Right ventricle myocardium superior (tissue), 1 donor: ENCODE measurements at regions of chr16 and their contacts with region 1.

Region 1: GRCh38 chr16:78122774-78123315 is 23.4 kb downstream of the WWOX start:
- DNase-seq: no peak
- ATAC-seq: peak; percentile 88

Region 2: DNA sequence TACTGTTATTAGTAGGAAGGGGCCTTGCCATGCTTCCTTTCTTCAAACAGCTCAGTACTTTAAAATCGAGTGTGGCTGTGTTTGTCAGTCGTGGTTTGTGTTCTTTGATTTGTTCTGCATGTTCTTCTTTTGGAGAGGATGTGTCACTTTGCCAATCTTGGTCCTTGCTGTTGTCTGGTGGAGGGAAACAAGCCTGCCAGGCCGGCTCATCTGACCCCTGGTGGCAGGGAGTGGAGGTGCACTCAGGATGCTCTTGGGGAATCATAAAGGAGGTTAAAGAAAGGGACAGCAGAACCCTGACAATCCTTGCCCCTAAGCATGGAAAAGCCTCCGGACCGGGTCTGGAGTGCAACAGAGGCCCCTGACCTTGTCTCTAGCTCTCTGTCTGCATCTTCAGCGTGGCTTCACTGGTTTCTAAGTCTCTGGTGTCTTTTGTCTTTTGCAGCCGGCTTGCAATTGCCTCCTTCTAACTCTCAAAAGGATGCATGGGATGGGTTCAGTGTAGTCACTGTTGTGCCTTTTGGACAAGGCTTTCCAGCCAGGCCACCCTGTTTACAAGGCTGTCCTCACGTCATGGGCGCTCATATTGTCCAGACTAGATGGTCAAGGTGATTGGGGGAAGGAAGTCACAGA is 112.4 kb after region 1 on chr16:
- intact Hi-C with region 1: loop called (anchors 5 kb)
- DNase-seq: peak; percentile 76
- ATAC-seq: peak; percentile 77

Region 3: DNA sequence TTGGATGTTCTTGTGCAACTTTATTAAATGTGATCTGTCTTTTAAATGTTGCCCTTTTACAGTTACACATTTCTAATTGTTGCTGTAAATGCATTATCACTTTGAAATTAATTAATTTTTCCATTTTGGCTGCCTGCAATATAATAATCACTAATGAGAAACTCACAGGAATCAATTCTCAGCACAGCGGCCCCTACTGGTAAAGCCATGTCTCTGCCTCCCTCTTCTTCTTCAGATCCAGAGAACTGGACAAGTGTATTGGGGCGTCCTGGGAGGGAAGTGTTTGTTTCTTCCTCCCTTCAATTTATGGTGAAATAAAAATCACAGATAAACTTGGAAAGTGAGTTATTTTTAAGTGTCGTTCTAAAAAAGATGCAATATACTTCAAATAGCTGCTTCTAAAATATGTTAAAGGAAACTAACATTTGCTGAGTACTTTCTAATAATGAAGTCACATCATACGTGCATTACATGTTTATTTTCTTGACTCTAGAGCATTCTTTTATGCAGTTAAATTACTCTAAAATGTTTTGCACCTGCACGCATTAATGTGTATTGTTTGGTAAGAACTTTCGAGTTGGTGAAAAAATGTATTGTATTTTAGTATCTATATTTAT is 314.6 kb after region 1 on chr16:
- intact Hi-C with region 1: loop called (anchors 5 kb)
- DNase-seq: no peak
- ATAC-seq: peak; percentile 56

Region 4: GRCh38 chr16:79601931-79602627 is 1479.2 kb after region 1 on chr16:
- intact Hi-C with region 1: loop called (anchors 10 kb)
- DNase-seq: peak; percentile 75
- ATAC-seq: peak; percentile 62